HCT116 (cell line): ENCODE measurements at regions of chr16 and their contacts with region 1.

Region 1: DNA sequence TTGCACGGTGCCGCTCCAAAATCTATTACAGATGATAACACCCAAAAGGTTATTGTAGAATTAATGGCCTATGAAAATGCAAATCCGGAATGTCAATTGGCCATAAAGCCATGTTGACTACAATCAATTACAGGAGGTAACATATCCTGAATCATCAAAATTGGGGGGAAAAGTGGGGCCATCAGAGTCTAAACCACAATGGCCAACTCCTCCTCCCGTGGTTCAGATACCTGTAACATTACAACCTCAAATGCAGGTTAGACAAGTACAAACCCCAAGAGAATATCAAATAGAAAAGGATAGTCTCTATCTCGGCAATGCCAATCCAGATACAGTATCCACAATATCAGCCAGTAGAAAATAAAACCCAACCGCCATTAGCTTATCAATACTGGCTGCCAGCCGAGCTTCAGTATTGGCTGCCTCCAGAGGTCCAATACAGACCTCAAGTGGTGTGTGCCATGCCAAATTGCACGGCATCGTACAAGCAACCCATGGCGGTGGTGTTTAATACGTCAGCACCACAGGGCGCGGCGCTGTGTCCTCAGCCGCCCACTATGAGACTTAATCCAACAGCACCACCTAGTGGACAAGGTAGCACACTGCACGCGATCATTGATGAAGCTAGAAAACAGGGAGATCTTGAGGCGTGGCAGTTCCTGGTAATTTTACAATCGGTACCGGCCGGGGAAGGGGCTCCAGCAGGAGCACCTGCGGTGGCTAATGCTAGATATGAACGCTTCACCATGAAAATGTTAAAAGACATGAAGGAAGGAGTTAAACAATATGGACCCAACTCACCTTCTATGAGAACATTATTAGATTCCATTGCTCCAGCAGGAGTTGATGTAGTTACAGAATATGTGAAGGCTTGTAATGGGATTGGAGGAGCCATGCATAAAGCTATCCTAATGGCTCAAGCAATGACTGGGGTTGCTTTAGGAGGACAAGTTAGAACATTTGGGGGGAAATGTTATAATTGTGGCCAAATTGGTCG is 15.2 kb downstream of the FLYWCH1 start:
- DNase-seq: peak; percentile 85
- ATAC-seq: peak; percentile 96
- H3K4me3 ChIP-seq: no peak overlapping the region
- H3K27ac ChIP-seq: no peak overlapping the region
- H3K4me1 ChIP-seq: peaks cover 0 to 11% of the 10 kb centered on the region in 2 experiments; a peak in 3 of 4 replicates
- H3K27me3 ChIP-seq: no peaks in the 10 kb centered on the region
- CTCF ChIP-seq: peak; percentile 93 to 98 (median 97)
- POLR2A ChIP-seq: no peak
- RAD21 ChIP-seq: peak; percentile 87

Region 2: DNA sequence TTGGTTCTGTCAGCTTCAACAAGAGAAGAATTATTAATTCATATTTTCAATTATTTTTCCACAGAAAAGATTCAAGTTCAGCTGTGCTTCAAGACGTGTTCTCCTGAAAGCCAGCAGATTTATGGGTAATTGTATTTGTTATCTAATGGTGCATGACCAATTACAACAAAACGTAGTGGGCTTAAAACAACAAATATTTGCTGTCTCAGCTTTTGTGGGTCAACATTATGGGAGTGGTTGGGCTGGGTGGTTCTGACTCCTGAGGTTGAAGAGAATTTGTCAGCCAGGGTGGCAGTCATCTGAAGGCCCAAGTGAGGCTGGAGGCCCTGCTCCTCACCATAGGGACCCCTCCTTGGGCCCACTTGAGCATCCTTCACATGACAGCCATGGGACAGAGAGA is 13.0 kb after region 1 on chr16:
- CTCF ChIA-PET with region 1: interaction called, 13 read pairs
- POLR2A ChIA-PET with region 1: no interaction called
- RAD21 ChIA-PET with region 1: no interaction called
- intact Hi-C with region 1: no loop called
- DNase-seq: no peak
- ATAC-seq: no peak
- H3K4me3 ChIP-seq: no peak overlapping the region
- H3K27ac ChIP-seq: no peak overlapping the region
- H3K4me1 ChIP-seq: no peaks in the 10 kb centered on the region
- H3K27me3 ChIP-seq: no peaks in the 10 kb centered on the region
- CTCF ChIP-seq: no peak
- POLR2A ChIP-seq: no peak
- RAD21 ChIP-seq: no peak

Region 3: DNA sequence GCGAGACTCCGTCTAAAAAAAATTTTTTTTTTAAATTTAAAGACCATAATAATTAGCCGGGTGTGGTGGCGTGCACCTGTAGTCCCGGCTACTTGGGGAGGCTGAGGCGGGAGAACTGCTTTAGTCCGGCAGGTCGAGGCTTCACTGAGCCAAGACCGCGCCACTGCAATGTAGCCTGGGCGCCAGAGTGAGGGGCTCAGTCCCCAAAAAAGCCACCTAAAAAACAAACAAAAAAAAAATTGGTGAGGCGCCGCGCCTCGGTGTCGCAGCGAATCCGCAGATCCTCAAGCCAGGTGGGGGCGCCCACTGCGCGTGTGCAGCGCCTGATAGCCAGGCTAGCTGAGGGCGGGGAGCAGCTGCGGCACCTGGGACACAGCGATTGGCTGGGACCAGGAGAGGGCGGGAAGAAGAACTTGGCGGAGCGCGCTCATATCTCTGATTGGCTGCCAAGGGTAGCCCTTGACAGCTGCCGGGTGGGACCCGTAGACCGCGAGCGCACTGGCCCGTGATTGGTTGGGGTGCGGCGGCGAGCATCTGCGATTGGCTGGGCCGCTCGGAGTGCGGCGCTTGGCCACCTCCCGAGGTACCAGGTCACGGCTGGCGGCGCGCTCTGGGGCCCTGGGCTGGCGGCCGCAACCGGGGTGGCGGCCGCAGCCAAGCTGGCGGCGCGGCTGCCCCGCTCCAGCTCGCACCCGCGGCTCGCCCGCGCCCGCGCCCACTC is 76.8 kb after region 1 on chr16:
- CTCF ChIA-PET with region 1: no interaction called
- POLR2A ChIA-PET with region 1: no interaction called
- RAD21 ChIA-PET with region 1: no interaction called
- intact Hi-C with region 1: no loop called
- DNase-seq: peak; percentile 99
- ATAC-seq: peak; percentile 93
- H3K4me3 ChIP-seq: 0 out of 4 replicates have a peak overlapping the region, but pooled peaks of 1 of the 2 experiments have one; percentile 18
- H3K27ac ChIP-seq: no peak overlapping the region
- H3K4me1 ChIP-seq: peaks cover 23 to 47% of the 10 kb centered on the region in 2 experiments
- H3K27me3 ChIP-seq: no peaks in the 10 kb centered on the region
- CTCF ChIP-seq: peak in 2 of 3 experiments; percentile 43 to 52; a peak in 3 of 6 replicates
- POLR2A ChIP-seq: no peak
- RAD21 ChIP-seq: no peak